ENCODE measurements at regions of chr6 and their contacts with region 1.

Region 1: GRCh38 chr6:165876588-165876987 is 213.5 kb upstream of the PDE10A start:
- DNase-seq: peak; percentile 10 to 23
- ATAC-seq: peak; percentile 58 to 72
- H3K4me3 ChIP-seq: no peak overlapping the region
- H3K27ac ChIP-seq: peak overlapping the region in 1 of 4 donors; percentile 48
- H3K4me1 ChIP-seq: no peaks in the 10 kb centered on the region
- H3K27me3 ChIP-seq: no peaks in the 10 kb centered on the region
- CTCF ChIP-seq: no peak
- POLR2A ChIP-seq: no peak

Region 2: GRCh38 chr6:165814679-165815078 is 61.9 kb before region 1 on chr6:
- in situ Hi-C with region 1: no loop called
- intact Hi-C with region 1: loop called (anchors 2 kb)
- DNase-seq: no peak
- ATAC-seq: no peak
- H3K4me3 ChIP-seq: no peak overlapping the region
- H3K27ac ChIP-seq: no peak overlapping the region
- H3K4me1 ChIP-seq: no peaks in the 10 kb centered on the region
- H3K27me3 ChIP-seq: peaks cover 0 to 3% (median 0%) of the 10 kb centered on the region in 3 donors
- CTCF ChIP-seq: no peak
- POLR2A ChIP-seq: no peak

Region 3: GRCh38 chr6:165937564-165938358 is 61.2 kb after region 1 on chr6:
- in situ Hi-C with region 1: no loop called
- intact Hi-C with region 1: no loop called
- DNase-seq: no peak
- ATAC-seq: no peak
- H3K4me3 ChIP-seq: no peak overlapping the region
- H3K27ac ChIP-seq: no peak overlapping the region
- H3K4me1 ChIP-seq: no peaks in the 10 kb centered on the region
- H3K27me3 ChIP-seq: no peaks in the 10 kb centered on the region
- CTCF ChIP-seq: no peak
- POLR2A ChIP-seq: no peak

Measured in gastrocnemius medialis (tissue), 4 donors.